ENCODE measurements at regions of chr7 and their contacts with region 1.

Region 1: DNA sequence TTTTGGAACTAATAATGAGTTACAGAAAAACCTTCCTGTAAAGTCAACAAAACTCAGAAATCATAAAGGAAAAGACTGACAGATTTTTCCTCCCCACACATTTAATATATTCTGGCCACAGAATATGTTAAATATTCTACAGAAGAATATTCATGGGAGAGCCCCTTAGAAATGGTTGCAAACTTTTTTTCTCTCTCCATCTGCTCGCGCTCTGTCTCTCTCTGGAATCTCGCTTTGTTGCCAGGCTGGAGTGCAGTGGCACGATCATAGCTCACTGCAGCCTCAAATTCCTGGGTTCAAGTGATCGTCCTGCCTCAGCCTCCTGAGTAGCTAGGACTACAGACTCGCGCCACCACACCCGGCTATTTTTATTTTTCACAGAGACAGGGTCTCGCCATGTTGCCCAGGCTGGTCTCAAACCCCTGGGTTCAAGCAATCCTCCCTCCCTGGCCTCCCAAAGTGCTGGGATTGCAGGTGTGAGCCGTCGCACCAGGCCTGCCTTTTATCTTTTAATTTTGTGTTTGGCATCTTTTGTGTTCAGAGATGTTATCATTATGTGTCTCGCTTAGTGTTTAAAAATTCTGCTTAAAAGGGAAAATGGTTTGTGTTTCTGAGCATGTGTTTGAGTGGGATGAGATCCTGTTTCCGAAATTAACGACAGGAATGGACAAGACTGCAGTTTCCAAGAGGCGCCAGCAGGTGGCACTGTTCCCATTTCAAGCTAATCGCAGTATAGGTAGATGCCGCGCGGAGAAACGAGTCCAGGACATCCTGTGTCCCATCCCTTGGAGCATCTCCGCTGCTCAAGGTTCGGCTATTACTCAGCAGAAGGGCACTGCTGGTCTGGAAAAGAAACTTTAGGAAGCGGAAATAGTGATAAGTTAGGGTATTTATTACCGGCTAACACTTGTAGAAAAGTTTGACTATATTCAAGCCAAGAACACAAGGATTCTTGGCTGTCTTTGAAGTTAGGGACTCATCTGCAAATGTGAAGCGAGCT is 23.1 kb upstream of the ST7 start:
- DNase-seq: peak; percentile 81
- H3K4me3 ChIP-seq: no peak overlapping the region
- H3K27ac ChIP-seq: no peak overlapping the region
- H3K4me1 ChIP-seq: no peaks in the 10 kb centered on the region
- H3K27me3 ChIP-seq: no peaks in the 10 kb centered on the region
- CTCF ChIP-seq: peak; percentile 93

Region 2: GRCh38 chr7:116862234-116862950 is 67.8 kb before region 1 on chr7 and contains the start of gene CAPZA2:
- intact Hi-C with region 1: no loop called
- DNase-seq: peak; percentile 93
- H3K4me3 ChIP-seq: peak within 1 kb of the TSS; percentile 82
- H3K27ac ChIP-seq: peak within 1 kb of the TSS; percentile 99
- H3K4me1 ChIP-seq: no peaks in the 10 kb centered on the region
- H3K27me3 ChIP-seq: no peaks in the 10 kb centered on the region
- CTCF ChIP-seq: no peak
- total RNA-seq, gene CAPZA2: 186 to 323 TPM

Region 3: GRCh38 chr7:116984917-116985316 is 54.7 kb after region 1 on chr7:
- intact Hi-C with region 1: loop called (anchors 10 kb)
- DNase-seq: no peak
- H3K4me3 ChIP-seq: no peak overlapping the region
- H3K27ac ChIP-seq: no peak overlapping the region
- H3K4me1 ChIP-seq: no peaks in the 10 kb centered on the region
- H3K27me3 ChIP-seq: no peaks in the 10 kb centered on the region
- CTCF ChIP-seq: peak; percentile 63

Region 4: DNA sequence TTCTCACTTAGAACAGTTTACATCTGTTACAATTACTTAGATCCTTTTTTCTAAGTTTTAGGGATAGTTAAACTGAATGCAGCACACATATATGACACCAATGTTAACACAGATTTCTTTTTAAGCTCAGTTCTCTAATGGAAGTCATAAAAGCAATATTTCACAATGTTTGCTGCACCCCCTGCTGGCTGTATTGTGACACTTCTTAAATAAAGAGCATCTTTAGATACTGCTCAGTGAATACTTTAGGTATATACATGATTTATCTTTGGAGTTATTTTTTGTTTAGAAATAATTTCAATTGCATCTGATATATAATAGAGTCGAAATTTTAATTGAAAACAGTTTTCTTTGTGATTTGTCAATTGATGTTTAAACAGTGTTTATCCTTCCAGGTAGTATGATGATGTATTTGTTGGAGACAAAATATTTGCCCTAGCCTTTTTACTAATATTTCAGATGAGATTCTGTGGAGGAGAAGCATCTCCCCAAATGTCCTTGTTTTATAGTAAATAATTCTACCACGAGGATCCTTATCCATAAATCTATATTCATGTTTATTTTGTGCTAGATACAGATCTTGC is 197.5 kb after region 1 on chr7:
- intact Hi-C with region 1: loop called (anchors 5 kb)
- DNase-seq: peak; percentile 60
- H3K4me3 ChIP-seq: no peak overlapping the region
- H3K27ac ChIP-seq: no peak overlapping the region
- H3K4me1 ChIP-seq: peaks cover 6% of the 10 kb centered on the region
- H3K27me3 ChIP-seq: no peaks in the 10 kb centered on the region
- CTCF ChIP-seq: peak; percentile 74

Measured in colonic mucosa (tissue), 4 donors.